Activated T-helper 1 cell treated with anti-CD3 and anti-CD28 coated beads, Interleukin-12 subunit alpha, Interleukin-12 subunit beta, Interleukin-2, Interleukin-4 antibody, amounts not matched to agents 30 ng/mL and 10 ng/mL and 1 ng/mL, durations not matched to agents 14 hours and 24 hours and 36 hours (primary cell): ENCODE measurements at regions of chr1 and their contacts with region 1.

Region 1: DNA sequence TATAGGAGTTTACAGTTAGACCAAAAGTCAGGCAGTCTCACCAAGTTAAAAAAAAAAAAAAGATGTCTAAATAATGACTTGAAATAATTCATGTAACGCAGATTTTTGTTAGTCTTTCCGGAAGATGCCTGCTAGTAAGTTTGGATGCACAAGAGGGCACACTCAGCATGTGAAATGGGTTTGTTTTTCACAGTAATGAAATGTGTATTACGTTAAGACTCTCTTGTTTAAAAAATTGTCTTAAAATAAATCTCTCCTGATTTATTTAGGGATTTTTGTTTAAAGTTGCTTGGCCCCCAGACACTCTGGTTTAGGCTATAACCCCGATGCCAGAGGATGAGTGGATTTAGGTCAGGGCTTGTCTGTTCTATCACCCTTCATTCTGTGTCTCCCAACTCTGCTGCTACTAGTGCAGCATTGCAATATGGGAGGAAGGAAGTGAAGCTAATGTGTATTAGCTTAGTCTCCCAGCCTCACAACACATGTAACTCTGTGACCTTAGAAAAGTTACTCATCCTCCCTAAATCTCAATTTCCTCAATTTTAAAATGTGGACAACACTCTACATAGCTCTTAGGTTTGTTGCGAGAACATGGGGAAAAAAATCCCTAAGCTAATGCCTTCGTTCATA is 25.7 kb downstream of the CTH start:
- DNase-seq: no peak
- H3K4me3 Mint-ChIP-seq: no peak overlapping the region
- H3K27ac Mint-ChIP-seq: no peak overlapping the region
- H3K4me1 Mint-ChIP-seq: peaks cover 10% of the 10 kb centered on the region
- H3K27me3 Mint-ChIP-seq: no peaks in the 10 kb centered on the region

Region 2: DNA sequence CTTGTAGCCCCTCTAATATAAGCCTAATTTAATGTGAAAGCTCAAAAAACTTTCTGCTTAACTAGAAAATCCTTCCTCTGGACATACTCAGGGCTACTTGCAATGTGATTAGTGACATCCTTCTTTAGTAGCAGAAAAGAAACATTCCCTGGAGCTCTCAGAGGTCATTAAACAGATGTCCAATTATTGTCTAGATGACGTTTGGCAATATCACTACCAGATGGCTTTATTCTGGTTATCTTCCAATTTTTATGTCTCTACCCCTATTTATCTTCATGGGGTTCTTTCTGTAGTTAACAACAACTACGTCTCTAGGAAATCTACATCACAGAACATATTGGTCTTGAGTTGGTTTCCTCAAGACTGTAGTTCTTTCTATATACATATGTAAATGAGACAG is 18.6 kb after region 1 on chr1:
- intact Hi-C with region 1: loop called (anchors 1 kb)
- DNase-seq: no peak
- H3K4me3 Mint-ChIP-seq: no peak overlapping the region
- H3K27ac Mint-ChIP-seq: no peak overlapping the region
- H3K4me1 Mint-ChIP-seq: no peaks in the 10 kb centered on the region
- H3K27me3 Mint-ChIP-seq: peaks cover 2% of the 10 kb centered on the region

Region 3: GRCh38 chr1:70504176-70504820 is 67.6 kb after region 1 on chr1:
- intact Hi-C with region 1: loop called (anchors 5 kb)
- DNase-seq: no peak
- H3K4me3 Mint-ChIP-seq: no peak overlapping the region
- H3K27ac Mint-ChIP-seq: no peak overlapping the region
- H3K4me1 Mint-ChIP-seq: peaks cover 10% of the 10 kb centered on the region
- H3K27me3 Mint-ChIP-seq: peaks cover 12% of the 10 kb centered on the region

Region 4: GRCh38 chr1:72037745-72038343 is 1601.1 kb after region 1 on chr1:
- intact Hi-C with region 1: no loop called
- DNase-seq: no peak
- H3K4me3 Mint-ChIP-seq: no peak overlapping the region
- H3K27ac Mint-ChIP-seq: no peak overlapping the region
- H3K4me1 Mint-ChIP-seq: no peaks in the 10 kb centered on the region
- H3K27me3 Mint-ChIP-seq: no peaks in the 10 kb centered on the region